ENCODE measurements at regions of chr19 and their contacts with region 1.

Region 1: GRCh38 chr19:50933640-50934039 is 19.2 kb downstream of the KLK5 start:
- DNase-seq: no peak
- ATAC-seq: no peak

Region 2: GRCh38 chr19:51029718-51030117 is 96.1 kb after region 1 on chr19:
- intact Hi-C with region 1: no loop called
- DNase-seq: no peak
- ATAC-seq: no peak

Region 3: GRCh38 chr19:51094696-51095279 is 161.1 kb after region 1 on chr19:
- intact Hi-C with region 1: loop called (anchors 5 kb)
- DNase-seq: no peak
- ATAC-seq: no peak

Region 4: DNA sequence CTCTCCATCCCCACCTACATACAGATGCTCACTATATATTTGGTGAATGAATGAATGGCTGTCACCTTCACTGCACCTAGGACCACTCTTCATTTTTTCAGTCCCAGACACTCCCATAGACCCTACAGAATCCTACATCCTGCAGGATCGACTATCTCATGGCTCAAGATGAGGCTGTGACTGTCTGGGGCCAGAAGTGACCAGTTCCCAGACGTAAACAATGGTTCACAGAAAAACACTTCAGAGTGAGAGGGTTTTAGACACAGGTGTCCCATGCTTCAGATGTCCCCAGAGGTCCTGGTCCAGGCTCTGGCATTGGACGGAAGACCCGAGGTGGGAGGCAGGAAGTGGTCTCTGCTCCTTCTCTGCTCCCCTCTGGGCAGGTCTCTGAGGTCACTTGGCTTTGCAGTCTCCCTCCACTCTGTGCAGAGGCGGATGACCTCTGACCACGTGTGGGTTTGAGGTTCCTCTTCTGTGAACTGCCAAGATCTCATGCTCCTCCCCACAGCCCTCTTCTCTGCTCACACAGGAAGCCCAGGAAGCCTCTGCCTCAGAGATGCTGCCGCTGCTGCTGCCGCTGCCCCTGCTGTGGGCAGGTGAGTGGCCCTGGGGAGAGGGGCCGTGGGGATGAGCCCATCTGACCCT is 233.3 kb after region 1 on chr19:
- intact Hi-C with region 1: loop called (anchors 2 kb)
- DNase-seq: no peak
- ATAC-seq: no peak

Measured in Right ventricle myocardium inferior (tissue), 1 donor.